ENCODE measurements at regions of chr5 and their contacts with region 1.

Region 1: DNA sequence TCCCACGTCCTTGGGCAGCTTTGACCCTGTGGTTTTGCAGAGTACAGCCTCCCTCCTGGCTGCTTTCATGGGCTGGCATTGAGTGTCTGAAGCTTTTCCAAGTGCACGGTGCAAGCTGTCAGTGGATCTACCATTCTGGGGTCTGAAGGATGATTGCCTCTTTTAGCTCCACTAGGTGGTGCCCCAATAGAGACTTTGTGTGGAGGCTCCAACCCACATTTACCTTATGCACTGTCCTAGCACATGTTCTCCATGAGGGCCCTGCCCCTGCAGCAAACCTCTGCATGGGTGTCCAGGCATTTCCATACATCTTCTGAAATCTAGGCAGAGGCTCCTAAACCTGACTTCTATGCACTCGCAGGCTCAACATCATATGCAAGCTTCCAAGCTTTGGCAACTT is 644.2 kb upstream of the CDH9 start:
- DNase-seq: no peak
- H3K4me3 ChIP-seq: no peak overlapping the region
- H3K27ac ChIP-seq: no peak overlapping the region
- H3K4me1 ChIP-seq: no peaks in the 10 kb centered on the region
- H3K27me3 ChIP-seq: no peaks in the 10 kb centered on the region
- CTCF ChIP-seq: no peak; the same call in 1 of the 2 replicates

Region 2: DNA sequence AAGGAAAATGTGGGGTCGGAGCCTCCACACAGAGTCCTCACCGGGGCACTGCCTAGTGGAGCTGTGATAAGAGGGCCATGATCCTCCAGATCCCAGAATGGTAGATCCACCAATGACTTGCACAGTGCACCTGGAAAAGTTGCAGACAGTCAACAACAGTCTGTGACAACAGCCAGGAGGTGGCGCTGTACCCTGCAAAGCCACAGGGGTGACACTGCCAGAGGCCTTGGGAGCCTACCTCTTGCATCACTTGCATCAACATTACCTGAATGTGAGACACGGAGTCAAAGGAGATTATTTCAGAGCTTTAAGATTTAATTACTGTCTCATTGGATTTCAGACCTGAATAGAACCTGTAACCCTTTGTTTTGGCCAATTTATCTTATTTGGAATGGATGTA is 30.1 kb before region 1 on chr5:
- CTCF ChIA-PET with region 1: no interaction called
- POLR2A ChIA-PET with region 1: no interaction called
- intact Hi-C with region 1: loop called (anchors 5 kb)
- DNase-seq: no peak
- H3K4me3 ChIP-seq: no peak overlapping the region
- H3K27ac ChIP-seq: no peak overlapping the region
- H3K4me1 ChIP-seq: no peaks in the 10 kb centered on the region
- H3K27me3 ChIP-seq: no peaks in the 10 kb centered on the region
- CTCF ChIP-seq: no peak

Region 3: GRCh38 chr5:27788184-27788583 is 105.6 kb after region 1 on chr5:
- CTCF ChIA-PET with region 1: no interaction called
- POLR2A ChIA-PET with region 1: no interaction called
- intact Hi-C with region 1: no loop called
- DNase-seq: no peak
- H3K4me3 ChIP-seq: no peak overlapping the region
- H3K27ac ChIP-seq: no peak overlapping the region
- H3K4me1 ChIP-seq: no peaks in the 10 kb centered on the region
- H3K27me3 ChIP-seq: no peaks in the 10 kb centered on the region
- CTCF ChIP-seq: no peak